PC-3 (cell line): ENCODE measurements at regions of chr2 and their contacts with region 1.

Region 1: GRCh38 chr2:86623651-86624541 is at the start of gene RNF103:
- DNase-seq: peak; percentile 92
- ATAC-seq: peak; percentile 83
- H3K4me3 ChIP-seq: peak within 1 kb of the TSS; percentile 83
- H3K27ac ChIP-seq: peak within 1 kb of the TSS; percentile 53
- H3K4me1 ChIP-seq: peaks cover 14% of the 10 kb centered on the region
- H3K27me3 ChIP-seq: no peaks in the 10 kb centered on the region
- CTCF ChIP-seq: no peak
- total RNA-seq, gene RNF103: 10.4 and 12.3 TPM in 2 replicates

Region 2: DNA sequence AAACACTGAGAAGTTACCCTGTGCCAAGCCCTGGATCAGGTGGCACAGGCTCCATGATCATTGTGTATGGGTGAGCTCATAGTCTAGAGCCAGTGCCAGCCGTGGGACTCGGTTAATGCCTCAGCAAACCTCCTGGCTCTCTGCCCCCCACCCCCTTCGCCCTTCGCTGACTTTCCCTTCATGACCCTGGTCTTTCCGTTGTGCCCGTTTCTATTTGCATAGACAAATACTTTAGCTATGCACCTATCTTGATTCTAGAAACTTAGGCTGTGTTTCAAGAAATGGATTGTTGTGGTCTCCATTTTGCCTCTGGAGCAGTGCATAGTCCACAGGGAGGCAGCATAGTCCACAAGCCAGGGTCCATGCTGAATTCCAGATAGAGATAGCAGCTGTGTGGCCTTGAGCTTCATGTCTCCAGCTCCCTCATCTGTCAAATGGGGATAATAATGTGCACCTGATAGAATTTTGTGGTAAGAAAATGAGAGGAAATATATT is 227.6 kb before region 1 on chr2:
- CTCF ChIA-PET with region 1: no interaction called
- POLR2A ChIA-PET with region 1: no interaction called
- intact Hi-C with region 1: loop called (anchors 2 kb)
- DNase-seq: peak; percentile 65
- ATAC-seq: peak; percentile 82
- H3K4me3 ChIP-seq: peak overlapping the region; percentile 34; the same call in 1 of the 2 replicates
- H3K27ac ChIP-seq: no peak overlapping the region
- H3K4me1 ChIP-seq: peaks cover 13% of the 10 kb centered on the region
- H3K27me3 ChIP-seq: no peaks in the 10 kb centered on the region
- CTCF ChIP-seq: peak; percentile 78

Region 3: GRCh38 chr2:86518481-86518880 is 105.4 kb before region 1 on chr2:
- CTCF ChIA-PET with region 1: no interaction called
- POLR2A ChIA-PET with region 1: no interaction called
- intact Hi-C with region 1: loop called (anchors 2 kb)
- DNase-seq: peak; percentile 10
- ATAC-seq: peak; percentile 50
- H3K4me3 ChIP-seq: no peak overlapping the region
- H3K27ac ChIP-seq: no peak overlapping the region
- H3K4me1 ChIP-seq: peaks cover 17% of the 10 kb centered on the region
- H3K27me3 ChIP-seq: no peaks in the 10 kb centered on the region
- CTCF ChIP-seq: peak; percentile 56

Region 4: GRCh38 chr2:86533589-86533988 is 90.3 kb before region 1 on chr2:
- CTCF ChIA-PET with region 1: no interaction called
- POLR2A ChIA-PET with region 1: no interaction called
- intact Hi-C with region 1: no loop called
- DNase-seq: no peak
- ATAC-seq: no peak
- H3K4me3 ChIP-seq: no peak overlapping the region
- H3K27ac ChIP-seq: no peak overlapping the region
- H3K4me1 ChIP-seq: no peaks in the 10 kb centered on the region
- H3K27me3 ChIP-seq: no peaks in the 10 kb centered on the region
- CTCF ChIP-seq: no peak

Region 5: DNA sequence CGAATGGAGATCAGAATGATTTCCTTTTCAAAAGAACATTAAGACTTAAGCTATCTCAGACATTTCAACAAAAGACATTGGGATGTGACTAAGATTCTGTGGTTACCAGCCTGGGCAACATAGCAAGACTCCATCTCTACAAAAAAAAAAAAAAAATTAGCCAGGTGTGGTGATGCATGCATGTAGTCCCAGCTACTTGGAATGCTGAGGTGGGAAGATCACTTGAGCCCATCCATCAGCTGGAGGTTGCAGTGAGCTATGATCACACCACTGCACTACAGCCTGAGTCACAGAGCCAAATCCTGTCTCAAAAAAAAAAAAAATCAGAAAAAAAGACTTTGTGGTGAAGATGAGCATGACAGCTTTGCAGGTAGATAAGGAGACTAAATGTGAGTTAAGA is 13.0 kb before region 1 on chr2:
- CTCF ChIA-PET with region 1: no interaction called
- POLR2A ChIA-PET with region 1: no interaction called
- intact Hi-C with region 1: no loop called
- DNase-seq: no peak
- ATAC-seq: no peak
- H3K4me3 ChIP-seq: no peak overlapping the region
- H3K27ac ChIP-seq: no peak overlapping the region
- H3K4me1 ChIP-seq: no peaks in the 10 kb centered on the region
- H3K27me3 ChIP-seq: no peaks in the 10 kb centered on the region
- CTCF ChIP-seq: no peak

Region 6: GRCh38 chr2:86672027-86672545 is 48.2 kb after region 1 on chr2:
- CTCF ChIA-PET with region 1: no interaction called
- POLR2A ChIA-PET with region 1: interaction called, 15 read pairs
- intact Hi-C with region 1: no loop called
- DNase-seq: no peak
- ATAC-seq: no peak
- H3K4me3 ChIP-seq: no peak overlapping the region
- H3K27ac ChIP-seq: no peak overlapping the region
- H3K4me1 ChIP-seq: no peaks in the 10 kb centered on the region
- H3K27me3 ChIP-seq: no peaks in the 10 kb centered on the region
- CTCF ChIP-seq: no peak

Region 7: DNA sequence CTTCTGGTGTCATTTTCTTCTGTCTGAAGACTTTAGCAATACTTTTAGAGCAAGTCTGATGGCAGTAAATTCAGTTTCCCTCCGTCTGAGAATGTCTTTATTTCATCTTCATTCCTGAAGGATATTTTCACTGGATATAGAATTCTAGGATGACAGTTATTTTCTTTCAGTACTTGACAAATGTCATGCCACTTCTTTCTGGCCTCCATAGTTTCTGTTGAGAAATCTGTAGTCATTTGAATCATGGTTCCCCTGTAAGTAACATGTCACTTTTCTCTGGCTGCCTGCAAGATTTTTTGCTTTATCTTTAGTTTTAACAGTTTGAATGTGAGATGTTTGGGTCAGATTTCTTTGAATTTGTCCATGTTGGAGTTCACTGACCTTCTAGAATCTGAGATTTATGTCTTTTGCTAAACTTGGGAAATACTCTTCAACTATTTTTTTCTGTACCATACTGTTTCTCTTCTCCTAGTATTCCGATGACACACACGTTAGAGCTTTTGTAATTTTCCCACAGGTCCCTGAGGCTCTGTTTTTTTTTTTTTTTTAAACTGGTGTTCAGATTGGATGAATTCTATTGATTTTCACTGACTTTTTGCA is 126.4 kb after region 1 on chr2:
- CTCF ChIA-PET with region 1: no interaction called
- POLR2A ChIA-PET with region 1: no interaction called
- intact Hi-C with region 1: loop called (anchors 5 kb)
- DNase-seq: no peak
- ATAC-seq: no peak
- H3K4me3 ChIP-seq: no peak overlapping the region
- H3K27ac ChIP-seq: no peak overlapping the region
- H3K4me1 ChIP-seq: no peaks in the 10 kb centered on the region; the same call in 1 of the 2 replicates
- H3K27me3 ChIP-seq: no peaks in the 10 kb centered on the region
- CTCF ChIP-seq: no peak